Activated naive CD4-positive, alpha-beta T cell treated with anti-CD3 and anti-CD28 coated beads for 36 hours (primary cell): ENCODE measurements at regions of chr2 and their contacts with region 1.

Region 1: GRCh38 chr2:61538200-61538919 is at the start of gene XPO1:
- DNase-seq: peak; percentile 100
- H3K4me3 Mint-ChIP-seq: peak within 1 kb of the TSS; percentile 90
- H3K27ac Mint-ChIP-seq: peak within 1 kb of the TSS; percentile 97
- H3K4me1 Mint-ChIP-seq: peaks cover 27% of the 10 kb centered on the region
- H3K27me3 Mint-ChIP-seq: no peaks in the 10 kb centered on the region
- total RNA-seq, gene XPO1: 201 to 203 TPM

Region 2: GRCh38 chr2:60806988-60807681 is 731.2 kb before region 1 on chr2:
- CTCF ChIA-PET with region 1: no interaction called
- intact Hi-C with region 1: loop called (anchors 2 kb)
- DNase-seq: peak; percentile 85
- H3K4me3 Mint-ChIP-seq: peak overlapping the region; percentile 28
- H3K27ac Mint-ChIP-seq: peak overlapping the region; percentile 90
- H3K4me1 Mint-ChIP-seq: peaks cover 48% of the 10 kb centered on the region
- H3K27me3 Mint-ChIP-seq: no peaks in the 10 kb centered on the region

Region 3: DNA sequence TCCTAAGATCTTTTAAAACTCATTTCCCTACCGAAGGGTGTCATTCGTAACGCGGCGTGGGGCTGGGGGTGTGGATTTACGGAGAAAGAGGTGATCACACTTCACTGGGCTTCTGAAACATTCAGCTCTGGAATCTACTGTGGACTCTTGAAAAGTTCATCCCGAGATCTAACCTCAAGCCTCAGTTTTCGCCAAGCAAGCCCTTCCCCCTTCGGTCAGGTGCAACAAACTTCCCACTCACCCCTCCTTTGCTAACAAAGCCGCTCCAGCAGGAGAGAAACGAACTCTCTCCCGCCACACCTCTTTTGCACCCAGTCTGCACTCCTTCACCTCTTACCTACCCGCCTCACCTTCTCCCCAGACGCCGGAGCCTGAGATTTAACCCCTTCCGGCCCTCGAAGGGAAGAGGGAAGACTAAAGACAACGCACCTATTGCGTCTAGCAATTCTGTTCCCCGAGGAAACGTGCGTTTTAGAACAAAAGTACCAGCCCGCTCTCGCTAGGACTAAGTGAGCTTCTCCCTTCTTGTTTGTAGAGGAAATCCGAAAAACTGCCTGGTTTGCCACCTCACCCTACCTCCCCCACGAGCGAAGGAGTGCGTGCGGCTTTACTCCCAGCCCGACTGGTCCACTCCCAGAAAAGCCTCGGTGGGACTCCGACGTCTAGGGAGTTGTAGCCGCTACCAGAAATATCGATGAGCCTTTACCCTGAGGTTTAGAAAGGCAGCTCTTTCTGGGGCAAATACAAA is 521.4 kb before region 1 on chr2:
- CTCF ChIA-PET with region 1: no interaction called
- intact Hi-C with region 1: loop called (anchors 1 kb)
- DNase-seq: peak; percentile 82
- H3K4me3 Mint-ChIP-seq: peak overlapping the region; percentile 98
- H3K27ac Mint-ChIP-seq: peak overlapping the region; percentile 95
- H3K4me1 Mint-ChIP-seq: peaks cover 43% of the 10 kb centered on the region
- H3K27me3 Mint-ChIP-seq: no peaks in the 10 kb centered on the region

Region 4: GRCh38 chr2:61238219-61239012 is 299.9 kb before region 1 on chr2:
- CTCF ChIA-PET with region 1: interaction called, 4 read pairs
- intact Hi-C with region 1: loop called (anchors 5 kb)
- DNase-seq: no peak
- H3K4me3 Mint-ChIP-seq: no peak overlapping the region
- H3K27ac Mint-ChIP-seq: peak overlapping the region; percentile 78
- H3K4me1 Mint-ChIP-seq: peaks cover 13% of the 10 kb centered on the region
- H3K27me3 Mint-ChIP-seq: no peaks in the 10 kb centered on the region

Region 5: DNA sequence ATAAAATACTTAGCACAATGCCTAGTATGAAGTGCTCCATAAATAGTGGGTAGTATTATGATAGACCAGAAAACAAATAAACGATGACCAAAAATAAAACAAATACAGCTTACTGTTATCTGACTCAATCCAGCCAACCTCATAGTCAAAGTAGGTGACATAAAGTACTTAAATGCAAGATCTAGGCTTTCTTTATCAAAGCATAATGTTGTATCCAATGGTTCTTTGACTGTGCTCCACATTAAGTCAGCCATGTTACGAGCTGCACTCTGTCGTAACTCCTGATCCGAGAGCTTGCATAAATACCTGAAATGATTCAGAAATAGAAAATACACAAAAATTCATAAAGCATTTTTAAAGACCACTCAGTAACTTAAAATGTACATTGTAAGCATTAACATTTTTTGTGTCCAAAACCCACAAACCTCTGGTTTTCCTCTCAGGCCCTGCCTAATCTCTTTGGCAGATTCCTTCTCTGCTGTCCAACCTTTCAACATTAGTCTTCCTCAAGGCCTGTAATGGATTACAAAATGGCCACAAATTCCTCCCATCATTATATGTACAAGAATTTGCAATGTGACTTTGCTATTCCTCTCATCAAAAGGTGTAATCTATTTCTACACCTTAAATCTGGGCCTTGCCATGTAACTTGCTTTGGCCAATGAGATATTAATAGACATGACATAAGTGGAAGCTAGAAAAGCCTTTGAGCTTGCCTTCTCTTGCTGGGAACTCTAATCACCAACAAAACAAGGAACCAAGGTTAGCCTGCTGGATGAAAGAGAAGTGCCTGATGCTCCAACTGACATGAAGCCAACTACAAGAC is 158.1 kb before region 1 on chr2:
- CTCF ChIA-PET with region 1: no interaction called
- intact Hi-C with region 1: no loop called
- DNase-seq: no peak
- H3K4me3 Mint-ChIP-seq: no peak overlapping the region
- H3K27ac Mint-ChIP-seq: no peak overlapping the region
- H3K4me1 Mint-ChIP-seq: no peaks in the 10 kb centered on the region
- H3K27me3 Mint-ChIP-seq: no peaks in the 10 kb centered on the region

Region 6: GRCh38 chr2:61575447-61575859 is 37.1 kb after region 1 on chr2:
- CTCF ChIA-PET with region 1: no interaction called
- intact Hi-C with region 1: loop called (anchors 1 kb)
- DNase-seq: peak; percentile 48
- H3K4me3 Mint-ChIP-seq: no peak overlapping the region
- H3K27ac Mint-ChIP-seq: peak overlapping the region; percentile 46
- H3K4me1 Mint-ChIP-seq: peaks cover 12% of the 10 kb centered on the region
- H3K27me3 Mint-ChIP-seq: no peaks in the 10 kb centered on the region

Region 7: DNA sequence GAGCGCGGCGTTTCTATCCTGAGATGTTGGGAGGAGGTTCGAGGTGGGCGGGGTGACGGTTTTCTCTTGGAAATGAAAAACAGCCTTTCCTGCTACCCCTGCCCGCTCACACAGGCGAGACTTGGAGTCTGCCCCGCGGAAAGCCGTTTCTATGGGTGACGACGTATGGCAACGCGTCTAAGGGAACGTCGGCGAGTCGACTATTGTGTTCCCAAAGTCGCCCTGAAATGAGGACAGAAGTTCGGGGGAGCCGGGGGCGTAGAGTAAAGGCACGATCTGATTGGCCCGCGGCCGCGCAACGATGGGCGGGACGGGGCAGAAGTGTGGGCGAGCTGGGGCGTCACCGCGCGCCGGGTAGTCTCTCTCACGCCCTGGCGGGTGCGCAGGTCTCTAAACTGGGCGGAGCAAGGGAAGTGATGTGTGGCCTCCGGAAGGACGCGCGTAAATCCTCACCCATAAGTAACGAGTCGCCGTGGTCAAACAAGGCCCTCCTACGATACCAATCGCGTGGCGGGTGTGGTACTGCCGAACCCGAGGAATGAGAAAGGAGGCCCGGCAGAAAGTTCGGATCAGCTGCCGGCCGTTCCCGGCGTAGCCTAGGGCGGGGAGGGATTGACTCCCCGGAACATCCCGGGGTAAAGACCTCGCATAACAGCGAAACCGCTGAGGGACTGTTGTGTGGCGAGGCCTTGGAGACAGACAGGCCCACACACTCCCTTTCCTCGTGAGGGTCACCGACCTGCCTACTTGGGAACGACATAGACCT is 225.9 kb after region 1 on chr2:
- CTCF ChIA-PET with region 1: no interaction called
- intact Hi-C with region 1: loop called (anchors 1 kb)
- DNase-seq: peak; percentile 98
- H3K4me3 Mint-ChIP-seq: peak overlapping the region; percentile 91
- H3K27ac Mint-ChIP-seq: peak overlapping the region; percentile 94
- H3K4me1 Mint-ChIP-seq: peaks cover 16% of the 10 kb centered on the region
- H3K27me3 Mint-ChIP-seq: no peaks in the 10 kb centered on the region

Region 8: GRCh38 chr2:62195421-62196277 is 657.3 kb after region 1 on chr2 and contains the start of gene B3GNT2:
- CTCF ChIA-PET with region 1: no interaction called
- intact Hi-C with region 1: loop called (anchors 1 kb)
- DNase-seq: peak; percentile 85
- H3K4me3 Mint-ChIP-seq: peak within 1 kb of the TSS; percentile 88
- H3K27ac Mint-ChIP-seq: peak within 1 kb of the TSS; percentile 91
- H3K4me1 Mint-ChIP-seq: peaks cover 22% of the 10 kb centered on the region
- H3K27me3 Mint-ChIP-seq: peaks cover 2% of the 10 kb centered on the region
- total RNA-seq, gene B3GNT2: 31.2 to 33.0 TPM